Activated CD8-positive, alpha-beta memory T cell treated with anti-CD3 and anti-CD28 coated beads, Interleukin-2, amount 10 ng/mL, durations not matched to agents 7 days and 5 days (primary cell): ENCODE measurements at regions of chr10 and their contacts with region 1.

Region 1: GRCh38 chr10:98062424-98062823 is 32.0 kb upstream of the CRTAC1 start:
- DNase-seq: no peak
- ATAC-seq: no peak
- H3K4me3 Mint-ChIP-seq: no peak overlapping the region
- H3K27ac Mint-ChIP-seq: no peak overlapping the region
- H3K4me1 Mint-ChIP-seq: no peaks in the 10 kb centered on the region
- H3K27me3 Mint-ChIP-seq: peaks cover 8% of the 10 kb centered on the region

Region 2: DNA sequence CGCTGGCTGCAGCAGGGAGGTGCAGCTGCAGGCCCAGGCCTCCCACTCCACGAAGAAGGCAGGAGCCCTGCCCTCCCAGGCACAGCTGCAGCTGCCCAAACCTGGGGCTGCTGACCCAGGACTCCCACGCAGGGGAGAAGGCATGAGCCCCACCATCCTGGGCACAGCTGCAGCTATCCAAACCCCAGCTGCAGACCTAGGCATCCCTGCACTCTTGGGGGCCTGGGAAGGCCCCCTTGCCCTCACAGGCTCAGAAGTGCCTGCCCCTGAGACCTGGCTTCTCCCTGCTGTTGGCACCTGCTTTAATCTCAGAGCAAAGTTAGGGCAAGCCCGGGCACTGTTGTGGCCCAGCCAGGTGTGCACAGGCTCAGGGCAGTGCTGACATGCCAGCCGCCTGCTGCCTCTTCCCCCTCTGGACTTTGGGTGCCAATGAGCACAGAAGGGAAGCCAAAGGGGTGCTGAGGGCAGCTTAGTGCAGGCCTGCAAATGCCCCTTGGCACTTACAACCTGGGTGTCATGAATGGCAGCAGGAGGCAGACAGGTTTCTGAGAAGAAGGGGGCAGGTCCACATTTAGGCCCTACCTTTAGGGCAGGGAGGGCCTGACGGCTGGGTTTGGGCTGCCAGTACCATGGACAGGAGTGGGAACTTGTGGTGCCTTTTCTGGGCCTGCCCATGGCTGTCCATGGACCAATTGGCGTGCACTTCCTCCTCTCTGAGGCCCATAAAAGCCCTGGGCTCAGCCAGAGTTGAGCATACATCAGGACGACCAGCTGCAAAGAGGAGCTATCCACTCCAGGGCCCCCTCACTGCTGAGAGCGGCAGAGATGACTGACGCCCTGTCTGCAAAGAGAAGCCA is 63.1 kb before region 1 on chr10:
- CTCF ChIA-PET with region 1: no interaction called
- DNase-seq: no peak
- ATAC-seq: no peak
- H3K4me3 Mint-ChIP-seq: no peak overlapping the region
- H3K27ac Mint-ChIP-seq: no peak overlapping the region
- H3K4me1 Mint-ChIP-seq: no peaks in the 10 kb centered on the region
- H3K27me3 Mint-ChIP-seq: peaks cover 5% of the 10 kb centered on the region

Region 3: GRCh38 chr10:98045785-98046389 is 16.5 kb before region 1 on chr10:
- CTCF ChIA-PET with region 1: interaction called, 11 read pairs
- DNase-seq: peak; percentile 71
- ATAC-seq: peak; percentile 78
- H3K4me3 Mint-ChIP-seq: no peak overlapping the region
- H3K27ac Mint-ChIP-seq: no peak overlapping the region
- H3K4me1 Mint-ChIP-seq: peaks cover 2% of the 10 kb centered on the region
- H3K27me3 Mint-ChIP-seq: peaks cover 39% of the 10 kb centered on the region